Right ventricle myocardium inferior (tissue), 1 donor: ENCODE measurements at regions of chr5 and their contacts with region 1.

Region 1: GRCh38 chr5:42811591-42812446 is at the start of gene SELENOP:
- DNase-seq: peak; percentile 64
- ATAC-seq: peak; percentile 95
- total RNA-seq, gene SELENOP: 284 TPM

Region 2: GRCh38 chr5:42840269-42840668 is 28.4 kb after region 1 on chr5:
- intact Hi-C with region 1: loop called (anchors 2 kb)
- DNase-seq: peak; percentile 76
- ATAC-seq: peak; percentile 75

Region 3: GRCh38 chr5:42858031-42858643 is 46.3 kb after region 1 on chr5:
- intact Hi-C with region 1: loop called (anchors 5 kb)
- DNase-seq: no peak
- ATAC-seq: peak; percentile 72

Region 4: GRCh38 chr5:42889311-42889933 is 77.6 kb after region 1 on chr5:
- intact Hi-C with region 1: loop called (anchors 2 kb)
- DNase-seq: no peak
- ATAC-seq: peak; percentile 88

Region 5: DNA sequence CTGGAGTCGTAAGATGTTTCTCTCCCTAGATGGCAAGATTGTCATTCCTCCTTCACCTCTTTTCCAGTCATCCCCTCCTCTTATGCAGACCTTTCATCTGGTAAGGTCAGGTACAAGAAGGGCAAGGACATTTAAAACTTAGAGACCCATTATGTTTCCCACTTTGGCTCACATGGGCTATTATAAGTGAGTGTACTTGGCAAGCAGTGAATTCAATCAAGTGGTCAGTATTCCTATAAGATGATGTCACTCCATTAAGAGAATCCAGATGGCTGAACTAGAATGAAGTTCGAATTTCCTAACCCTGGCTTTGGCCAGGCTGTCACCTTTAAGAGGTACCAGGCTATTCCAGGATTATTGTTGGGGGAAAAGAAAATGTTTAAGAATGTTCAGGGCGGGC is 341.1 kb after region 1 on chr5:
- intact Hi-C with region 1: no loop called
- DNase-seq: no peak
- ATAC-seq: no peak